ENCODE measurements at regions of chr12 and their contacts with region 1.

Region 1: GRCh38 chr12:82855872-82856271 is 169.2 kb downstream of the TMTC2 start:
- DNase-seq: no peak
- H3K4me3 ChIP-seq: no peak overlapping the region
- H3K27ac ChIP-seq: no peak overlapping the region
- H3K4me1 ChIP-seq: peaks cover 24% of the 10 kb centered on the region
- H3K27me3 ChIP-seq: no peaks in the 10 kb centered on the region
- CTCF ChIP-seq: no peak
- POLR2A ChIP-seq: no peak

Region 2: GRCh38 chr12:82740129-82741000 is 115.5 kb before region 1 on chr12:
- CTCF ChIA-PET with region 1: no interaction called
- POLR2A ChIA-PET with region 1: no interaction called
- dilution Hi-C with region 1: no loop called
- intact Hi-C with region 1: loop called (anchors 5 kb)
- DNase-seq: no peak
- H3K4me3 ChIP-seq: no peak overlapping the region
- H3K27ac ChIP-seq: no peak overlapping the region
- H3K4me1 ChIP-seq: peaks cover 19% of the 10 kb centered on the region
- H3K27me3 ChIP-seq: no peaks in the 10 kb centered on the region
- CTCF ChIP-seq: no peak
- POLR2A ChIP-seq: no peak

Region 3: GRCh38 chr12:82981162-82981561 is 125.3 kb after region 1 on chr12:
- CTCF ChIA-PET with region 1: no interaction called
- POLR2A ChIA-PET with region 1: no interaction called
- dilution Hi-C with region 1: no loop called
- intact Hi-C with region 1: loop called (anchors 5 kb)
- DNase-seq: peak; percentile 15
- H3K4me3 ChIP-seq: no peak overlapping the region
- H3K27ac ChIP-seq: no peak overlapping the region
- H3K4me1 ChIP-seq: peaks cover 7% of the 10 kb centered on the region
- H3K27me3 ChIP-seq: no peaks in the 10 kb centered on the region
- CTCF ChIP-seq: no peak
- POLR2A ChIP-seq: no peak